ENCODE measurements at regions of chr17 and their contacts with region 1.

Region 1: GRCh38 chr17:57121338-57122042 is 36.4 kb downstream of the AKAP1 start:
- ATAC-seq: peak in 7 of 8 experiments; percentile 40 to 78 (median 63)
- H3K4me3 ChIP-seq: no peak overlapping the region
- H3K27ac ChIP-seq: no peak overlapping the region
- H3K4me1 ChIP-seq: no peaks in the 10 kb centered on the region

Region 2: DNA sequence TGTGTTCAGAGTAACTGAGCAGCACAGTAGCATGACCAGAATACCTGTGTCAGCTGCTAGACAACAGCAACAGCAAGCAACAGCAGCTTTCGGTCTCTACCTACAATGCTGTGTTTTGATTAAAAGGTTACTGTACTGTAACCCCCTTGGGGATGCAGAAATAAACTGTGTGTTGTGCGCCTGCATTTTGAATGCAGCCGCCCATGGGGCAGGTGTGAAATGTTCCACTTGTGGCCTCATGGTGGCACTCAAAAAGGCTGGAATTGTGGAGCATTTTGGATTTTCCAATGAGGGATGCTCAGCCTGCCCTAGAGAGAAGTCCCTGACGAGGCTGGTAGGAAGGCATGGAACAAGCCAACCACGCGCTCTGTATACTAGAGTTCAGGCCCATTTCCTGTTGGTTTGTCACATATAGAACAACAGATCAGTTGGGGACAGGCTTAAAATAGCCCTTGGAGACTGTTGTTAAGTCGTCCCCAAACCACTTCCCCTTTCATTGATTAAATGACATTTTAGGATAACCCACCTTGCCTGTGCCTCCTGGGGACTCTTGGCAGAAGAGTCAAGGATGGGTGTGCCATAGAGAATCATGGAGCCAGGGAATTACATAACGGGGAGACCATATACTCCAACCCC is 116.4 kb before region 1 on chr17:
- in situ Hi-C with region 1: no loop called
- ATAC-seq: no peak
- H3K4me3 ChIP-seq: no peak overlapping the region
- H3K27ac ChIP-seq: no peak overlapping the region
- H3K4me1 ChIP-seq: peaks cover 3 to 12% of the 10 kb centered on the region in 2 donors

Region 3: GRCh38 chr17:57215311-57215710 is 93.8 kb after region 1 on chr17:
- in situ Hi-C with region 1: no loop called
- ATAC-seq: no peak
- H3K4me3 ChIP-seq: no peak overlapping the region
- H3K27ac ChIP-seq: no peak overlapping the region
- H3K4me1 ChIP-seq: peaks cover 0 to 2% of the 10 kb centered on the region in 2 donors

Region 4: DNA sequence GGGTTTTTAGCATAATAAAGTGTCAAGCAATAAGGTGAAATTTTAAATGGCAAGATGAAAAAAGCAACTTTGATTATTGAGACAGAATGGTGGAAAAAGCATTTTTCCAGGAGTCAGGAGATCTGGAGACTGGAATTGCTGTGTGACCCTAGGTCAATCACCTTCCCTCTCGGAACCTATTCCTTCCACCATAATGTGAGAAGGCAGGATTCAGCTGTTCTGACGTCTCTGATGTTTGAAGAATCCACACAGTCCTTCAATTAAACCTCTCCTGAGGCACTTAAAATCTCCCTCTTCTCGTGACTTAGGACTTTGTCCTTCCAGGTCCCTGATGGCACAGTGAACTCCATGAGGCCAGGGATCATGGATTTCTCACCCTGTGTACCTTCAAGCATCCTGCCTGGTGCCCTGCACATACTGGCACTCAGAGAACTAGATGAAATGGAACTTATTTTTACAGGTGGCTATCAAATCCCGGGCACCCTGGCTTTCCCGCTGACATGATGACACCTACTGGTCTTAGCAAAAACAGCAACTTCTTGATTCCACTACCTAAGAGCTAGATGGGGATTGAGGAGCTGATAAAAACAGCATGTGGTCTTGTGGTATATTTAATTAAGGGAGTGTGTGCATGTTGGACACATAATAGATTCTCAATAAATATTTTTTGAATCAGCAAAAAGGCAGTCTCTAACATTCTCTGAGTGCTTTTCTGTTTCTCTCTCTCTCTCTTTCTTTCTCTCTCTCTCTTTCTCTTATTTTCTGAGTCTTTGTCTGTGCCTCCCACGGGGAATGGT is 625.9 kb after region 1 on chr17:
- in situ Hi-C with region 1: loop called in 3 of 9 experiments (anchors 10 to 25 kb)
- ATAC-seq: peak in 7 of 8 experiments; percentile 28 to 89 (median 67)
- H3K4me3 ChIP-seq: no peak overlapping the region
- H3K27ac ChIP-seq: no peak overlapping the region
- H3K4me1 ChIP-seq: peaks cover 15% of the 10 kb centered on the region in 2 donors

Region 5: GRCh38 chr17:57833179-57833939 is 711.9 kb after region 1 on chr17:
- in situ Hi-C with region 1: loop called in 5 of 9 experiments (anchors 10 to 25 kb)
- ATAC-seq: peak; percentile 82 to 99 (median 96)
- H3K4me3 ChIP-seq: peak overlapping the region; percentile 8 to 27 (median 21)
- H3K27ac ChIP-seq: peak overlapping the region in 1 of 2 donors; percentile 47
- H3K4me1 ChIP-seq: peaks cover 12 to 15% of the 10 kb centered on the region in 2 donors